Activated naive CD4-positive, alpha-beta T cell treated with anti-CD3 and anti-CD28 coated beads for 36 hours (primary cell): ENCODE measurements at regions of chr16 and their contacts with region 1.

Region 1: GRCh38 chr16:23556881-23557778 is at the starts of genes EARS2 and UBFD1:
- DNase-seq: peak; percentile 97
- H3K4me3 Mint-ChIP-seq: peak within 1 kb of the TSS; percentile 89
- H3K27ac Mint-ChIP-seq: peak within 1 kb of the TSS; percentile 85
- H3K4me1 Mint-ChIP-seq: peaks cover 47% of the 10 kb centered on the region
- H3K27me3 Mint-ChIP-seq: no peaks in the 10 kb centered on the region
- total RNA-seq, gene EARS2: 23.7 to 25.1 TPM
- total RNA-seq, gene UBFD1: 52.3 to 54.6 TPM

Region 2: GRCh38 chr16:23035240-23035639 is 521.9 kb before region 1 on chr16:
- CTCF ChIA-PET with region 1: no interaction called
- intact Hi-C with region 1: no loop called
- DNase-seq: no peak
- H3K4me3 Mint-ChIP-seq: no peak overlapping the region
- H3K27ac Mint-ChIP-seq: no peak overlapping the region
- H3K4me1 Mint-ChIP-seq: peaks cover 7% of the 10 kb centered on the region
- H3K27me3 Mint-ChIP-seq: peaks cover 19% of the 10 kb centered on the region

Region 3: DNA sequence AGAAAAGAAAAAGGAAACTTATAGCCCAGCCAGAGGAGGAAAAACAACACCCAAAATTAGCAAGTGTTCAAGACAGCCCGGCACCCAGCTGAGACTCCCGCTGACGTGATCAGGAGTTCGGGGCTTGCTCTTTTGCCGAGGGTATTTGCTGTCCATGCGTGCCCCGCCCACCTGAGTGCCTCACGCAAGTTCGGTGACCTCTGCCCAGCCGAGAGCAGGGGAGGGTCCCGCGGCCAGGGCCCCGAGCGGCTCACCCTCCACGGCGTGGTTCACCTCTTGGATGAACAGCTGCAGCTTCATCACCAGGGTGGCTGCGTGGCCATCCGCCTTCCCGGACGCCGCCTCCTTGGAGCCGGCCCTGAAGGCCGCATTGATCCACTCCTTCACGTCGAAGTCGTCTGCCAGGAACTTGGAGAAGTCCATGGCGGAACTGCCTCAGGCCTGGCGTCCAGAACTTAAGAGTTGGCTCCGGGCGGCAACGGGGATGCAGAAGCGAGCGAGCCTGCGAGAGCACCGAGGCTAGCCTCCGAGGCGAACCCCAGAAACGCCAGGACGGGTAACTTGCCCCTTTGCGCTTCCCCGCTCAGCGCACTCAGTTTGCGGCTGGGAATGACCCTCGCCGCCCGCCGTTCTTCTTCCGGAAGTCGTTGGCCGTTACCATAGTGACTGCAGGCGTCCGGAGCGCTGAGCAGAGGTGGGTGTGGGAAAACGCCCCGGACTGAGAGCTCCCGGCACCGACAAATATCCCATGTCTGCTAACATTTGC is 104.4 kb before region 1 on chr16 and contains the start of gene COG7:
- CTCF ChIA-PET with region 1: no interaction called
- intact Hi-C with region 1: loop called (anchors 1 kb)
- DNase-seq: peak; percentile 89
- H3K4me3 Mint-ChIP-seq: peak within 1 kb of the TSS; percentile 97
- H3K27ac Mint-ChIP-seq: peak within 1 kb of the TSS; percentile 86
- H3K4me1 Mint-ChIP-seq: peaks cover 34% of the 10 kb centered on the region
- H3K27me3 Mint-ChIP-seq: no peaks in the 10 kb centered on the region
- total RNA-seq, gene COG7: 16.4 to 16.9 TPM

Region 4: GRCh38 chr16:23510164-23510914 is 46.8 kb before region 1 on chr16 and contains the start of gene GGA2:
- CTCF ChIA-PET with region 1: interaction called, 4 read pairs
- intact Hi-C with region 1: loop called (anchors 1 kb)
- DNase-seq: peak; percentile 77
- H3K4me3 Mint-ChIP-seq: peak within 1 kb of the TSS; percentile 78
- H3K27ac Mint-ChIP-seq: peak within 1 kb of the TSS; percentile 73
- H3K4me1 Mint-ChIP-seq: peaks cover 48% of the 10 kb centered on the region
- H3K27me3 Mint-ChIP-seq: no peaks in the 10 kb centered on the region
- total RNA-seq, gene GGA2: 53.0 to 62.7 TPM

Region 5: DNA sequence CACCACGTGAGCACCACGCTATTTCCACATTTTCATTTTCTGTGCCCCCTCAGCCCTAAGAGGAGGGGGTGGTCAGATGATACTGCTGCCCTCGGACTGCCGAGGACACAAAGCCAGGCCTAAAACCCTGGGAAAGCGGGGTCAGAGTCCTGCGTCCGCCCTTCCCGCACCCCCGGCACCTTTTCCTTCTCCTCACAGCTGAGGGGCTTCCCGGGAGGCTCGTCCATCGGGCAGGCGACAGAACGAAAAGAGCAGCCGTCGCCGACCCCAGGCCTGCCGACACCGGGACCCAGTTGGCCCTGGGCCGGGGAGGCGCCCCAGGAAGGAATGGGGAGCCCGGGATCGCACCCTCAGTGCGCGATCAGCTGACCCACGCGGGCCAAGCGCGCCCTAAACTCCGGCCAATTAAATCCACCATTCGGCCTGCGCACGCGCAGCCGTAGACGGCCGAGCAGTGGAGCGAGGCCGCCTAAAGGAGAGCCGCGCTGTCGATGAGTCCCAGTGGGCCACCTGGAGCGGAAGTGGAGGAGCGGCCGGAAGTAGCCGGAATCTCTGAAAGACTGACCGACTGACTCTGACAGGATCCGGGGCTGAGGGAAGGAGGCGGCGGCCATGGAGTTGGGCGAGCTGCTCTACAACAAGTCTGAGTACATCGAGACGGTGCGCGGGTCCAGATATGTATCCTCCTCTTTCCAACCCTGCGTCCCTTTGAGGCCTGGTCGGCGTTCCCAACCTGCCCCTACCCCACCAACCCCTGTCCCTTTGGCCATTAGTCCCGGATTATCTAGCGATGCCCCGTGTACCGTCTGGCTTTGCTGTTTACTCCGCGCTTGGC is 84.0 kb after region 1 on chr16 and contains the starts of genes DCTN5 and PALB2:
- CTCF ChIA-PET with region 1: no interaction called
- intact Hi-C with region 1: loop called (anchors 1 kb)
- DNase-seq: peak; percentile 93
- H3K4me3 Mint-ChIP-seq: peak within 1 kb of the TSS; percentile 100
- H3K27ac Mint-ChIP-seq: peak within 1 kb of the TSS; percentile 97
- H3K4me1 Mint-ChIP-seq: peaks cover 33% of the 10 kb centered on the region
- H3K27me3 Mint-ChIP-seq: no peaks in the 10 kb centered on the region
- total RNA-seq, gene DCTN5: 57.5 to 60.7 TPM
- total RNA-seq, gene PALB2: 17.8 to 18.1 TPM

Region 6: GRCh38 chr16:23729503-23730424 is 172.6 kb after region 1 on chr16:
- CTCF ChIA-PET with region 1: no interaction called
- intact Hi-C with region 1: loop called (anchors 5 kb)
- DNase-seq: no peak
- H3K4me3 Mint-ChIP-seq: no peak overlapping the region
- H3K27ac Mint-ChIP-seq: no peak overlapping the region
- H3K4me1 Mint-ChIP-seq: peaks cover 3% of the 10 kb centered on the region
- H3K27me3 Mint-ChIP-seq: peaks cover 12% of the 10 kb centered on the region